ENCODE measurements at regions of chr14 and their contacts with region 1.

Region 1: DNA sequence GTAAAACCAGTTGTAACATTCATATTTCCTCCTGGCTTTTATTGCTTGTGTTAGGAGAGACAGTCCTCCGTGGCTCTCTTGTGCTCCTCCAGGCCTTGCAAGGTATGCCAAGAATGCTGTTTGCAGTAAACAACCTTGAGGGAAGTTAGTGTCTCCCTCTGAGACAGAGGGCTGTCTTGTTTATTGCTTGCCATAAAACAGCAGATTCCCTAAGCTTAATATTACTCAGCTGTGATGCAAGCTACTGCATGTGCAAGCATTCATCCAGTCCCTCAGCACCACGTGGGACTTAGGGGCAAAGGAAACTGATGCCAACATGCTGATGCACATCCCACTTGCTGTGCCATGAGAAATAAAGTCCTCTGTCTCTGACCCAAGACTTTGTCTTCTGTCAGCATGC is 6.6 kb downstream of the POMT2 start:
- DNase-seq: no peak

Region 2: GRCh38 chr14:76876076-76876475 is 438.0 kb before region 1 on chr14:
- intact Hi-C with region 1: loop called in 1 of 2 experiments (anchors 10 kb)
- DNase-seq: no peak

Region 3: GRCh38 chr14:77151918-77152588 is 162.0 kb before region 1 on chr14:
- intact Hi-C with region 1: loop called (anchors 5 to 10 kb)
- DNase-seq: no peak

Region 4: DNA sequence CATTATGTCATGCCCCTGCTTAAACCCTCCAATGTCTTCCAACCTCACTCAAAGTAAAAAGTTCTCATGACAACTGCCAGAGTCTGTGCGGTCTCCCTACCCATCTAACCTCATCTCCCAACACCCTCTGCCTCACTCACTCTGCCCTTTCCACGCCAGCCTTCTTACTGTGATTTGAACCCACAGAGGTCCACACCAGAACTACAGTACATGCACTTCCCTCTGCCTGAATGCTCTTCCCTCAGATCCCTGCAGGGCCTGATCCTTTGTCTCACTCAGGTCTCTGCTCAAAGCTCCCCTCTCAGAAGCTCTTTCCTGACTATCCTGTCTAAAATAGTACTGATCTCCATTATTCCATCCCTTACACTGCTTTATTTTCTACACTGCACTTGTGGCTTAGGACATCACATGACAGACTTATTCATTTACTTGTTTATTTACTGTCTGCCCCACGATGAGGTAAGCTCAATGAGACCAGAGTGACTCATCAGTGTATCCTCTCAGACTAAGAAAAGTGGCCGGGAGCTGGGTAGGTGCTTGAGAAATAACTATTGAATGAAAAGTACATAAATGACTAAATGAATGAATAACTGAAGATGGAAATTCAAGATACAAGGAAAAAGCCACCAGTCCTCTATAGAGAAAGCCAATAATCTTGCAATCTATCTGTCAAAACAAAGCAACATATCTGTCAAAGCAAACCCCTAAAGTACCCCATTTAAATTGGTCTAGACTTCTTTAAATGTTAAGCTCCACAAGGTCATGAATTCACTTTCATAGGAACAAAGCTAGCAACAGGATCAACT is 10.4 kb before region 1 on chr14:
- intact Hi-C with region 1: loop called in 1 of 2 experiments (anchors 2 kb)
- DNase-seq: no peak

Measured in posterior vena cava (tissue), 2 donors.